Panc1 (cell line): ENCODE measurements at regions of chr7 and their contacts with region 1.

Region 1: GRCh38 chr7:128666200-128666599 is 5.9 kb upstream of the GARIN1A start:
- DNase-seq: no peak
- ATAC-seq: no peak
- H3K4me3 ChIP-seq: no peak overlapping the region
- H3K27ac ChIP-seq: no peak overlapping the region
- H3K4me1 ChIP-seq: no peaks in the 10 kb centered on the region
- H3K27me3 ChIP-seq: no peaks in the 10 kb centered on the region
- CTCF ChIP-seq: peak; percentile 60

Region 2: DNA sequence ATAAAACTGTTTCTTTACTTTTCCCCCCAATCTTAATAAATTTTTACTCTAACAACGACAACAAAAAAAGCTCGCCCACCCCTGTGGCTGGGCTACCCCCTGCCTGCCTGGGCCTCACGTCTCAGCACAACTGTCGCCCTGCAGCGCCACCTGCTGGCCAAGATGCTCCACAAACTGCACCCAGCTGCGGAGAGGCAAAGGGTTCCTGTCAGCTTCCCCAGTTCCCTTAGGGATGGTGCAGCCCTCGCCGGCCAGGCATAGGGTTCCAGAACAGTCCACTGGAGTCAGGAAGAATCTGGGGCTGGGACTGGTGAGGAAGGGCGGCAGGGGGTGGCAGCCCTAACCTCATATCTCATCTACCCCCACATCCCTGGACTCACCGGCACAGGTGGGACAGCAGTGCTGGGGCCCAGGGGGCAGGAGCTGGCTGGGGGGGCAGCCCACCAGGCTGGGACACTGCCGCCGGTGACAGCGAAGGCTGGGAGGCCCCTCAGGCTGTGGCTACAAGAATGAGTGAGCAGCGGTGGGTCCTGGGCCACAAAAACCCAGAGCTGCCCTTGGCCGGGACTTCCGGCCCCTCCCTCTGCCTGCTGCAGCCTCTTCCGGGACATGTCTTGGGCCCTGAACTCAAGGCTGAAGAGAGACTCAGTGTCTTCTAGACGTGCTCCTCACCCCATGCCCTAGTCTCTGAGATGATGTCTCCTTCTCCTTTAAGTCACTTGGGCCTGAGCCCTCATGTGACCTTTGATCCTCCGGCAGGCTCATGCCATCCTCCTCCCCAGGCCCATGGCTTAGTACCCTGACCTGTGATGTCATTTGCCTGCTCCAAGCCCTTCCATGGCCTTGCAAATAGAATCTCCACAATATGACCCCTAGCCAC is 217.7 kb after region 1 on chr7:
- CTCF ChIA-PET with region 1: interaction called, 3 read pairs
- POLR2A ChIA-PET with region 1: no interaction called
- in situ Hi-C with region 1: no loop called
- intact Hi-C with region 1: loop called (anchors 10 kb)
- DNase-seq: peak; percentile 52
- ATAC-seq: peak; percentile 75
- H3K4me3 ChIP-seq: no peak overlapping the region
- H3K27ac ChIP-seq: no peak overlapping the region
- H3K4me1 ChIP-seq: no peaks in the 10 kb centered on the region
- H3K27me3 ChIP-seq: no peaks in the 10 kb centered on the region
- CTCF ChIP-seq: peak; percentile 97